ENCODE measurements at regions of chr3 and their contacts with region 1.

Region 1: GRCh38 chr3:124905849-124906248 is 18.7 kb upstream of the ITGB5 start:
- DNase-seq: no peak
- H3K4me3 ChIP-seq: no peak overlapping the region
- H3K27ac ChIP-seq: no peak overlapping the region
- H3K4me1 ChIP-seq: no peaks in the 10 kb centered on the region
- H3K27me3 ChIP-seq: no peaks in the 10 kb centered on the region
- CTCF ChIP-seq: no peak
- EP300 ChIP-seq: no peak
- POLR2A ChIP-seq: no peak

Region 2: DNA sequence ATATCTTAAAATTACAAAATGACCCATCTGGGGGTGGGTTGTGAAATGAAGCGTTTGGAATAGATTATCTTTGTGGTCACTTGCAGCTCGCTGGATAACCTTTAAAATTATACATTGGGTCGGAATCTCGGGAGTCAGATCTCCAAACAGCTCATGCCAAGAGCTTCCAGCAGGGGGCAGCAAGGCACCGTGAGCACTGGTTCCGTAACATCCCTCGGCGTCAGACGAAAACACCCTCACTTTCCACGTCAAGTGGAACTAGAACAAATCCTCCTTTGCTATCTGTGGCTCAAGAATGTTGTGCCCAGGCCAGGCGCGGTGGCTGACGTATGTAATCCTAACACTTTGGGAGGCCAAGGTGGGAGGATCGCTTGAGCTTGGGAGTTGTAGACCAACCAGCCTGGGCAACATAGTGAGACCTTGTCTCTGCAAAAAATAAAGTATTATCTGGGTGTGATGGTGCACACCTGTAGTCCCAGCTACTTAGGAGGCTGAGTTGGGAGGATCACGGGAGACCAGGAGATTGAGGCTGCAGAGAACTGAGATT is 144.5 kb before region 1 on chr3:
- intact Hi-C with region 1: loop called (anchors 1 kb)
- DNase-seq: peak; percentile 96
- H3K4me3 ChIP-seq: no peak overlapping the region
- H3K27ac ChIP-seq: peak overlapping the region; percentile 43 to 76 (median 66)
- H3K4me1 ChIP-seq: peaks cover 0 to 19% (median 16%) of the 10 kb centered on the region in 4 donors
- H3K27me3 ChIP-seq: no peaks in the 10 kb centered on the region
- CTCF ChIP-seq: peak; percentile 93 to 98 (median 96)
- EP300 ChIP-seq: peak in 2 of 4 donors; percentile 79 to 89
- POLR2A ChIP-seq: no peak

Region 3: GRCh38 chr3:124845406-124845805 is 60.4 kb before region 1 on chr3:
- intact Hi-C with region 1: no loop called
- DNase-seq: peak; percentile 86
- H3K4me3 ChIP-seq: no peak overlapping the region
- H3K27ac ChIP-seq: peak overlapping the region; percentile 81 to 91 (median 86)
- H3K4me1 ChIP-seq: peaks cover 0 to 56% (median 43%) of the 10 kb centered on the region in 4 donors
- H3K27me3 ChIP-seq: no peaks in the 10 kb centered on the region
- CTCF ChIP-seq: no peak
- EP300 ChIP-seq: no peak
- POLR2A ChIP-seq: no peak

Region 4: DNA sequence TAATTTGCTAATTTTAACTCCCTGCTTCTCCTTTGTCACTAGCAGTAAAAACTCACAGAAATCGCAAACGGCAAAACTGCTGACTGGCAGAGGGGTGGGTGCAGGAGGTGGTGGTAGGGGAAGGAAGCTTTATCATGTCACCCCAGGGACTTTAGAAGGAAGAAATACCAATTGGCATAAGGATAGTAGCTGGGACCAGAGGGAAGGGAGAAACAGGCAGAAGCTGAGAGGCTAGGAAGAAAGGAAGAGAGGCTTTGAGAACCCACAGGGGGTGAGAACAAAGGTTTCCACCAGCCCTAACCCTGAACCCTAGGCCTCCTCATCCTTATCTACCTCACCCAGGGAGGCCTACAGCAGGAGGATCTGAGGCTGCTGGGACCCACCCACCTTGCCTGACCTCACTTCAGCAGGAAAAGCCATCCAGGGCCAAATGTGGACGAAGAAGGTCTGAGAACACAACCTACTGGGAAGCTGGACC is 29.4 kb before region 1 on chr3:
- intact Hi-C with region 1: no loop called
- DNase-seq: peak; percentile 64
- H3K4me3 ChIP-seq: no peak overlapping the region
- H3K27ac ChIP-seq: peak overlapping the region in 2 of 4 donors; percentile 51 to 79
- H3K4me1 ChIP-seq: peaks cover 0 to 66% (median 43%) of the 10 kb centered on the region in 4 donors
- H3K27me3 ChIP-seq: no peaks in the 10 kb centered on the region
- CTCF ChIP-seq: no peak
- EP300 ChIP-seq: no peak
- POLR2A ChIP-seq: no peak

Region 5: GRCh38 chr3:124923833-124924232 is 18.0 kb after region 1 on chr3:
- intact Hi-C with region 1: no loop called
- DNase-seq: no peak
- H3K4me3 ChIP-seq: no peak overlapping the region
- H3K27ac ChIP-seq: no peak overlapping the region
- H3K4me1 ChIP-seq: peaks cover 0 to 4% (median 0%) of the 10 kb centered on the region in 4 donors
- H3K27me3 ChIP-seq: no peaks in the 10 kb centered on the region
- CTCF ChIP-seq: no peak
- EP300 ChIP-seq: no peak
- POLR2A ChIP-seq: no peak

Measured in sigmoid colon (tissue), 7 donors.